Dorsolateral prefrontal cortex (tissue), 120 donors: ENCODE measurements at regions of chr1 and their contacts with region 1.

Region 1: GRCh38 chr1:66924756-66925557 is at the starts of genes DNAI4 and MIER1:
- DNase-seq: peak; percentile 91 to 98 (median 96)
- H3K4me3 ChIP-seq: peak within 1 kb of the TSS; percentile 63 to 98 (median 89)
- H3K27ac ChIP-seq: peak within 1 kb of the TSS; percentile 87 to 99 (median 97)
- H3K27me3 ChIP-seq: no peaks in the 10 kb centered on the region
- CTCF ChIP-seq: peak in 47 of 56 donors; percentile 5 to 65 (median 47)
- total RNA-seq, gene DNAI4: 17.6 to 69.1 (median 35.3) TPM
- total RNA-seq, gene MIER1: 25.1 to 40.5 (median 32.1) TPM

Region 2: DNA sequence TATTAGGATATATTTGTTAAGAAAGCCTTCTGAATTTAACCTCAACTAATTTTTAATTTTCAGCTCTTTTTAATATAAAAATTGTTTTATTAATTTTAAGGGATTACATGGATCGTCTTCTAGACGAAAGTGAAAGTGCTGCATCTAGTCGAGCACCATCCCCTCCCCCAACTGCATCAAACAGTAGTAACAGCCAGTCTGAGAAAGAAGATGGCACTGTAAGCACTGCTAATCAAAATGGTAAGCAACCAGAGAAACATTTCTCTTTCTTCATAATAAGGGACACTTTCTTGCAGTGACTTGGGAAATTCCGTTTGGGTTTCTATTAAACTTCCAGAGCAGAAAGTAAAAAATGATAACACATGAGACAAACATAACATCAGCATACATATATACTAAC is 56.7 kb after region 1 on chr1:
- intact Hi-C with region 1: loop called (anchors 2 to 10 kb)
- DNase-seq: peak in 5 of 10 donors; percentile 10 to 68 (median 47)
- H3K4me3 ChIP-seq: peak overlapping the region in 58 of 59 donors; percentile 0 to 67 (median 49)
- H3K27ac ChIP-seq: peak overlapping the region in 55 of 59 donors; percentile 27 to 88 (median 74)
- H3K27me3 ChIP-seq: no peaks in the 10 kb centered on the region
- CTCF ChIP-seq: peak in 33 of 56 donors; percentile 9 to 66 (median 33)

Region 3: DNA sequence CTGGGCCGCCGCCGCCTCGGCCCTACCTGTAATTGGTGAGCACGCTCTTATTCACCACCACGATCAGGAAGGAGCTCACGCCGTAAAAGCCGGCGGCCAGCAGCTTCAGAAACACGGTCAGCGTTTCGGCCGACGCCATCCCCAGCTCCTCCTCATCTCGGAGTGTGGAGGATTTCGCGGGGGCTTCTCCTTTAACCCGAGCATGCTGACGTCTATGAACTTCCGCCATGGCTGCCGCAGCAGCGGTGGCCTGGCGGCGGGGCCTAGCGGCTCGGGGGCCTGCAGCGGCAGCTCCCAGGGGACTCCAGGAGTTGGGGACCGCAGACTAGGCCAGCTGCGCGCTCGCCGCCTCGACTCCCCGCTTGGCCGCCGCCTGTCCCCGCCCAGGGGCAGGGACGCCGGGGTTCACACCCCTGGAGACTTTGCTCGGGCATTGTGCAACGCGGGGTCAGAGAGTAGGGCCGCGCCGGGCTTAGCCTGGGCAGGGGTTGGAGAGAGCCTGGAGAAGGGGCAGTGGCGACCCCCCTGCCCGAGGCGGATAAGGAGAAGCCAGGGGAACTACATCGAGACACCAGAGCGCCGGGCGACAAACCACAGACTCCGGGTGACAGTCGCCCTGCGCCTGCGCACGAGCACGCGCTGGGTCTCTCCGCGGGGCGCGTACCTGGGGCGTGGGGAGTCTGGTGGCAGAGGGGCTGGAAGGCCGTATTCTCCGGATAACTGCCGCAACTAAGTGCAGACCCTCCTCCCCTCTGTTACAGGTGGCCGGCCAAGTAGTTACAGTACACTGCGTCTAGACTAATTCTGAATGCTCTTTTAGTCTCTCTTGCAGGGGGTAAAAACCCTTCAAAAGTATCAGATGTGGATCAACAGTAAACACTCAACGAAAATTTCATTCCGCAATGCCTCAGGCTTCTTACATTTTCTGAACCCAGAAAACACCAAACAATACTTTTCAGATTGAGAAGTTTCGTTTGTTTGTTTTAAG is 129.1 kb after region 1 on chr1 and contains the start of gene SLC35D1:
- intact Hi-C with region 1: loop called (anchors 2 kb)
- DNase-seq: peak; percentile 67 to 88 (median 74)
- H3K4me3 ChIP-seq: peak within 1 kb of the TSS; percentile 61 to 95 (median 86)
- H3K27ac ChIP-seq: peak within 1 kb of the TSS; percentile 86 to 99 (median 95)
- H3K27me3 ChIP-seq: no peaks in the 10 kb centered on the region
- CTCF ChIP-seq: peak in 14 of 56 donors; percentile 3 to 36 (median 19)
- total RNA-seq, gene SLC35D1: 5.7 to 12.8 (median 8.3) TPM

Region 4: GRCh38 chr1:67149179-67149770 is 224.3 kb after region 1 on chr1:
- intact Hi-C with region 1: loop called in 1 of 2 experiments (anchors 5 kb)
- DNase-seq: peak in 8 of 10 donors; percentile 13 to 62 (median 52)
- H3K4me3 ChIP-seq: peak overlapping the region in 6 of 59 donors; percentile 3 to 23 (median 9)
- H3K27ac ChIP-seq: no peak overlapping the region
- H3K27me3 ChIP-seq: peaks cover 0 to 3% (median 0%) of the 10 kb centered on the region in 45 donors
- CTCF ChIP-seq: peak; percentile 24 to 97 (median 81)